ENCODE measurements at regions of chr6 and their contacts with region 1.

Region 1: GRCh38 chr6:169789982-169790927 is 38.8 kb downstream of the ERMARD start:
- DNase-seq: peak; percentile 78 to 92
- ATAC-seq: peak; percentile 95
- H3K4me3 ChIP-seq: peak overlapping the region; percentile 16 to 51
- H3K27ac ChIP-seq: no peak overlapping the region
- H3K4me1 ChIP-seq: no peaks in the 10 kb centered on the region
- H3K27me3 ChIP-seq: no peaks in the 10 kb centered on the region

Region 2: GRCh38 chr6:169188475-169188874 is 601.8 kb before region 1 on chr6:
- intact Hi-C with region 1: no loop called
- DNase-seq: no peak
- ATAC-seq: no peak
- H3K4me3 ChIP-seq: no peak overlapping the region
- H3K27ac ChIP-seq: peak overlapping the region; percentile 29 to 90
- H3K4me1 ChIP-seq: peaks cover 0 to 1% of the 10 kb centered on the region in 2 donors
- H3K27me3 ChIP-seq: no peaks in the 10 kb centered on the region

Region 3: DNA sequence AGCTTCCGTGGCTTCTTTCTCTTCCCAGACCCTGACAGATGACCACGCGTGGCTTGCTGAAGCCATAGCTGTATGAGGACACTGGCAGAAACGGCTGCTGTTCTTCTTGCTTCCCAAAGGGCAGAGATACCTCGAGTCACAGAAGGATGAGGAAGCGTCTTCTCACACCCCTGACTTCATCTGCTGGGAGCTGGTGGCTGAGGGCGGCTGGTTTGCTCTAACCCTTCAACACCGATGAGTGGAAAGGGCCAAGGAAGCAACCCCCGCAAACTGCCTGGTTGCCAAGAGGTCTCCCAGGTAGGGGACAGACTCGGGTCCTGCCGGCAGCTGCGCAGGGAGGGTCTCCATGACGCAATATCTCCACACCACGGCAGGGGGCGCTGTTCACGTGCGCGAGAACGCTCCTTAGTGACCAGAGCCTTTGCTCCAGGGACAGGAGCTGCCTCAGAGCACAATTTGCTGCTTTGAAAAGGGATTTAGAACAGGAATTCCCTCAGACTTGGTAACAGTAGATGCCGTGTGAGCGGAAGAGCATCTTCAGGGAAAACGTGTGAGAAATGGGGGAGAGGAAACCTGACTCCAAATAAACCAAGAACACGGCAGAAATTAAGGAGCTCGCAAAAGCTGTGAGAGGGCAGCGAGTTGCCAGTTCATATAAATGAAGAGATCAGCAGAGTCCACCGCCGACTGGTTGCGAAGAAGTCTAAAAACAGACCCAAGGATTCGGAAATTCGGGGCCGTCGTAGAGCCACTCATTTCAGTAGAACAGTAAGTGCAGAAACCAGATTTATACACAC is 41.4 kb after region 1 on chr6:
- intact Hi-C with region 1: loop called in 1 of 2 experiments (anchors 1 kb)
- DNase-seq: peak; percentile 79 to 93
- ATAC-seq: peak; percentile 80
- H3K4me3 ChIP-seq: no peak overlapping the region
- H3K27ac ChIP-seq: no peak overlapping the region
- H3K4me1 ChIP-seq: no peaks in the 10 kb centered on the region
- H3K27me3 ChIP-seq: no peaks in the 10 kb centered on the region

Region 4: GRCh38 chr6:170052991-170053821 is 263.0 kb after region 1 on chr6:
- intact Hi-C with region 1: no loop called
- DNase-seq: peak; percentile 42 to 72
- ATAC-seq: no peak
- H3K4me3 ChIP-seq: no peak overlapping the region
- H3K27ac ChIP-seq: no peak overlapping the region
- H3K4me1 ChIP-seq: no peaks in the 10 kb centered on the region
- H3K27me3 ChIP-seq: no peaks in the 10 kb centered on the region

Region 5: DNA sequence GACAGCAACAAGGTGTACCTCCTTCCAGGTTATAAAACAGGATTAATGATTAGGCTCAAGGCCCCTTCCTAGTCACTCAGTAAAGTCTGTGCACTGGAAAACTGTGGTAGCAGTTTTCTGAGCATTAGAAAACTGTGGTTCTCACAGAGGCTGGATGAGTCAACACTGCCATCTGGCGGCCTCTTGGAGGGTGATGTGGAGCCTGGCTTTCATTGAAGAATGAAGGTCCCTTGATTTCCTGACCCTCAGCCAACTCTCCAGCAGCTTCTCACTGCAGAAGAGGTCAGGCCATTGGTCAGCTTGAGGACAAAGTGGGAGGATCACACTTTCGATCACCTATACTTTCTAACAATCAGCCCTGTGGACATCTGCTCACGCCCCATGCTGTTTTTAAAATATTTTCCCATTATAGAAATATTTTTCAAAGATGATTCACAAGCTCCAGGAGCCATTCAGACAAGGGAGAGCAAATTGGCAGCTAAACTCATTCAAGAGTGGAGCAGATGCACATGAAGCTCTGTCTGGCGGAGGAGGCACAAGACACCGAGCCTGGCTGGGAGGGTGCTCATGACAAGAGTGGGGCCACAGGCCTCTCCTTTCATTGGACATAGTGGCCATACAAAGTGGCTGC is 739.7 kb after region 1 on chr6:
- intact Hi-C with region 1: loop called (anchors 5 kb)
- DNase-seq: peak; percentile 76 to 88
- ATAC-seq: peak; percentile 80
- H3K4me3 ChIP-seq: no peak overlapping the region
- H3K27ac ChIP-seq: no peak overlapping the region
- H3K4me1 ChIP-seq: no peaks in the 10 kb centered on the region
- H3K27me3 ChIP-seq: no peaks in the 10 kb centered on the region